Aorta (tissue), 5 donors: ENCODE measurements at regions of chr5 and their contacts with region 1.

Region 1: DNA sequence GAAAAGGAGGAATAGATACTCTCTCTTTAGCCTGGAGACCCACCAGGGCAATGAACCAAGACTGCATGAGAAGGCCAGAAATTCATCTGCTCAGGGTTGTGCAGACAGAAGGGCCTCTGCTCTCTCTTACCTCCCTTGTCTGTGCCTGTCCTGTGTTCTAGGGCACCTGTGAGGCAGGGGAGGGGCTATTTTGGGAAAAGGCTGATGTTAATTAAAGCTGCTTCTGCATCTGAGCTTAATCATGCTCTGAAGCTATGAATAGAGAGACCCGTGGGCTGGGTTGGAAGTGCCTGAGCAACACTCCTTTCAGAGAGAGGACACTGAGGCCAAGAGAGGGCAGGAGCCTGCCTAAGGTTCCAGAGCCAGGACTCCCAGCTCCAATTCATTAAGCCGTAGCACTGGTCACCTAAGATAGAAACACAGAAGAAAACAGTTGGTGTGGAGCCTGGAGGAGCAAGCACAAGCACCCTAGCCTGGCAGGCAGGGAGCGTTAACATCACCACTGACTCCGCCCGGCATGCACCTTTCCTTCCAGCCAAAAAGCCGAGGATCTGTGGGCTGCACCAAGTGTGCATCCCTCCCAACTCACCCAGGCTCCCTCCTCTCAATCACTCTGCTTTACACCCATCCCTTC is 31.4 kb upstream of the STING1 start:
- DNase-seq: no peak
- ATAC-seq: no peak
- H3K4me3 ChIP-seq: no peak overlapping the region
- H3K27ac ChIP-seq: no peak overlapping the region
- H3K4me1 ChIP-seq: no peaks in the 10 kb centered on the region
- H3K27me3 ChIP-seq: no peaks in the 10 kb centered on the region

Region 2: GRCh38 chr5:139422307-139422893 is 91.6 kb before region 1 on chr5:
- intact Hi-C with region 1: loop called (anchors 1 to 2 kb)
- DNase-seq: no peak
- ATAC-seq: peak; percentile 75
- H3K4me3 ChIP-seq: no peak overlapping the region
- H3K27ac ChIP-seq: no peak overlapping the region
- H3K4me1 ChIP-seq: no peaks in the 10 kb centered on the region
- H3K27me3 ChIP-seq: no peaks in the 10 kb centered on the region

Region 3: GRCh38 chr5:139482050-139482889 is 31.7 kb before region 1 on chr5 and contains the start of gene STING1:
- intact Hi-C with region 1: loop called in 1 of 2 experiments (anchors 2 kb)
- DNase-seq: peak; percentile 91 to 95
- ATAC-seq: peak; percentile 75
- H3K4me3 ChIP-seq: peak within 1 kb of the TSS; percentile 34 to 60
- H3K27ac ChIP-seq: peak within 1 kb of the TSS; percentile 96
- H3K4me1 ChIP-seq: no peaks in the 10 kb centered on the region
- H3K27me3 ChIP-seq: no peaks in the 10 kb centered on the region
- total RNA-seq, gene STING1: 111 to 151 TPM

Region 4: DNA sequence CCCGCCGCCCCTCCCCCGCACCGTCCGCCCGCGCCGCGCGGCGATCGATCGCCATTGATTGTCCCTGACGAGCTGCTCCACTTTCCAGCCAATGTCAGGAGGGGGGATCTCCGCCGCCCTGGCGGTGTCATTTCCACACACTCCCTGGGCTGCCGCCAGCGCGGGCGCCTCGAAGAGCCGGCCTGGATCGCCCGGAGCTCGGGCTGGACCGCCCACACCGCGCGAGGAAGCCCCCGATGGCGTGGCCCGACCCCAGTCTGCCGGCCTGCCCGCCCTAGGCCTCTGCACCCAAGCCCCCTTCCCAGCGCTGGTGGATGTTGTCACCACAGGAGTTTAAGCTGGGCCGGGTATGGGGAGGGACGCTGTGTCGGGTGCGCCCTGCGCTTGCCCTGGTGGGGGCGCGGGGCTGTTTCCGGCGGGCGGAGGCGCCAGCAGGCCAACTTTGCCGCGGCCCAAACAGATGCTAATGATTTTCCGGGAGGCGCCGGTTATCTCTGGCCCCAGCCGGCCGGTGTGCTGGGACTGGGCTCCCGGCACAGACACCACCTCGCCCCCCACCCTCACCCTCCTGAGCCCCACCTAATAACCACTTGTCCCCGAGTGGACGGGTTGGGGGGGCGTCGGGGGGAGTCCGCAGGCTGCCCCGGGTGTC is 123.6 kb after region 1 on chr5:
- intact Hi-C with region 1: no loop called
- DNase-seq: peak; percentile 90 to 95
- ATAC-seq: peak; percentile 89
- H3K4me3 ChIP-seq: peak overlapping the region; percentile 9 to 52
- H3K27ac ChIP-seq: peak overlapping the region in 1 of 2 donors; percentile 69
- H3K4me1 ChIP-seq: peaks cover 0 to 2% of the 10 kb centered on the region in 2 donors
- H3K27me3 ChIP-seq: no peaks in the 10 kb centered on the region